ENCODE measurements at regions of chr9 and their contacts with region 1.

Region 1: GRCh38 chr9:15293084-15293483 is 13.9 kb downstream of the TTC39B start:
- DNase-seq: no peak
- ATAC-seq: no peak
- H3K4me3 ChIP-seq: no peak overlapping the region
- H3K27ac ChIP-seq: no peak overlapping the region
- H3K4me1 ChIP-seq: no peaks in the 10 kb centered on the region
- H3K27me3 ChIP-seq: no peaks in the 10 kb centered on the region
- CTCF ChIP-seq: no peak

Region 2: DNA sequence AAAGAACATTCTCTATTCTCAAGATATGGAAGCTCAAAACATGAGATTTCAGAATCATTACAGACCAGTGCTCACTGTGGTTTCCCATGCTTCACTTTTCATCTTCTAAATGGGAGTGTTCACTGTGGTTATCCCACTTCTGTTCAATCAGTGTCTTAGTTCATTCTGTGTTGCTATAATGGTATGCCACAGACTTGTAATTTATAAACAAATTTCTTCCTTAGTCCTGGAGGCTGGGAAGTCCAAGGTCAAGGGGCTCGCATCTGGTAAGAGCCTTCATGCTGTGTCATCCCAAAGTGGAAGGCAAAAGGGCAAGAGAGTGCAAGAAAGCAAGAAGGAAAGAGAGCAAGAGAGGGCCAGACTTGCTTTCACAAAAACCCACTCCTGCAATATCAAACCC is 132.4 kb before region 1 on chr9:
- CTCF ChIA-PET with region 1: no interaction called
- POLR2A ChIA-PET with region 1: no interaction called
- in situ Hi-C with region 1: no loop called
- intact Hi-C with region 1: no loop called
- DNase-seq: no peak
- ATAC-seq: no peak
- H3K4me3 ChIP-seq: no peak overlapping the region
- H3K27ac ChIP-seq: no peak overlapping the region
- H3K4me1 ChIP-seq: no peaks in the 10 kb centered on the region
- H3K27me3 ChIP-seq: no peaks in the 10 kb centered on the region
- CTCF ChIP-seq: no peak

Region 3: GRCh38 chr9:16458696-16459420 is 1165.8 kb after region 1 on chr9:
- CTCF ChIA-PET with region 1: no interaction called
- POLR2A ChIA-PET with region 1: interaction called, 11 read pairs
- in situ Hi-C with region 1: no loop called
- intact Hi-C with region 1: no loop called
- DNase-seq: no peak
- ATAC-seq: no peak
- H3K4me3 ChIP-seq: no peak overlapping the region
- H3K27ac ChIP-seq: no peak overlapping the region
- H3K4me1 ChIP-seq: no peaks in the 10 kb centered on the region
- H3K27me3 ChIP-seq: no peaks in the 10 kb centered on the region
- CTCF ChIP-seq: no peak

Measured in Panc1 (cell line).